ENCODE measurements at regions of chr5 and their contacts with region 1.

Region 1: GRCh38 chr5:96934708-96935558 is 947 bp upstream of the LNPEP start:
- DNase-seq: peak; percentile 93 to 98 (median 98)
- ATAC-seq: peak; percentile 93 to 94
- H3K4me3 ChIP-seq: peak overlapping the region; percentile 94
- H3K27ac ChIP-seq: peak overlapping the region; percentile 97
- H3K4me1 ChIP-seq: no peaks in the 10 kb centered on the region
- H3K27me3 ChIP-seq: no peaks in the 10 kb centered on the region

Region 2: GRCh38 chr5:96978812-96979449 is 44.0 kb after region 1 on chr5:
- intact Hi-C with region 1: loop called in 1 of 4 experiments (anchors 5 kb)
- DNase-seq: no peak
- ATAC-seq: no peak
- H3K4me3 ChIP-seq: no peak overlapping the region
- H3K27ac ChIP-seq: no peak overlapping the region
- H3K4me1 ChIP-seq: peaks cover 3% of the 10 kb centered on the region
- H3K27me3 ChIP-seq: no peaks in the 10 kb centered on the region